PC-9 (cell line): ENCODE measurements at regions of chr22 and their contacts with region 1.

Region 1: DNA sequence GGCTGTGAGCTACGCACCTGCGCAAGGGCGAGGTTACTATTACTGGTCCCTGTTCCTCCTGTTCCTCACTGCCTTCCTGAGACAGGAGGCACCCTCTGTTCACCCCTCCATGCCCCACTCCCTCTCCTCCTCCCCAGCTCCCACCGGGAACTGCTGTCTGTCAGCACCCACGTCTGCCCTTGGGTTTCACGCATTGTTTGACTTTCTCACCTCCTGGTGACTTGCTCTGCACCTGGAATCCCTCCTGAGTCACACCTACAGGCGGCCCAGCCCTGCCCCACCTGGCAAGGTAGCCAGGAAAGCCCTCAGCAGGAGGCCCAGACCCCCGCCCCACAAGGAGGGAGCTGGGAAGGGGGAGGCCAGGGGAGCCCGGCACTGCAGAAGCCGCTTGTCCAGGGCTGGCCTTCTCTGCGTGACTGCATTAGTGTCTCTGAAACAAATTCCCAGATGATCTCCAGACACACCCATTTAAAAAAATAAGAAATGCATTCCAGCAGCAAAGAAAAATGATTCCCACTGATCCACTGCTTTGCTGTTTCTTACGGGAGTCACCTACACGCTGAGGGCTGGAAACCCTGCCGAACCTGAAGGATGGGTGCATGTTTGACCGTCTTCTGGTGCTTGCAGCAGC is 86.4 kb downstream of the CELSR1 start:
- DNase-seq: peak; percentile 92 to 95
- H3K4me3 ChIP-seq: peak overlapping the region; percentile 1; the same call in 1 of the 2 replicates
- H3K27ac ChIP-seq: peak overlapping the region; percentile 96
- H3K4me1 ChIP-seq: peaks cover 83% of the 10 kb centered on the region
- H3K27me3 ChIP-seq: no peaks in the 10 kb centered on the region
- CTCF ChIP-seq: no peak

Region 2: DNA sequence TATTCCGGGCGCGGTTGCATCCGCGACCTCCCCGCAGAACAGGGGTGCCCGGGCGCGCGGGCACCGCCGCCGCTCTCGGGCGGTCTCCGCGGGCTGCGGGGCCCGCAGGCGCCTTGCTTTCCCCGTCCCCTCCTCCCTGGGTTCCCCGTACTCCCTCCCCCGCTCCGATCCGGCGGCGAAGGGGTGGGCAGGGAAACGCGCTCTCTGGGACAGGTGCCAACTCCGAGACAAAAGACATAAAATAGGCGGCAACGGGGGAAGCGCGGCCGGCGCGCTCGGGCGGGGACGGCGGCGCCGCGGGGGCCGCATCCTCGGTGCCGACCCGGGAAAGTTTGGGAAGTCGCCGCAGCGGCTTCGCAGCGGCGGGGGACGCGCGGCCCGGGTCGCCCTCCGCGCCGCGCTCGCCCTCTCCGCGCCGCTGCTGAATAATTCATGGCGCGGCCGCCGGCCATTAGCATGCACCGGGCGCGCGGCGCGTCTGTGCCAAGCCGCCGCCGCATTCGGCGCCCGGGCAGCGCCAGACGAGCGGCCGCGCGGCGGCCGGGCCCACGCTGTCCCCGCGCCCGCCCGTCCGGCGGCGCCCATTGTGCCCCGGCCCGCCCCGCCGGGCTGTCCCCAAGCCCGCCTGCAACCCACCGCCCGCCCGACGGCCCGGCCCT is 379.5 kb before region 1 on chr22:
- CTCF ChIA-PET with region 1: no interaction called
- POLR2A ChIA-PET with region 1: no interaction called
- intact Hi-C with region 1: no loop called
- DNase-seq: peak; percentile 80 to 92
- H3K4me3 ChIP-seq: peak overlapping the region; percentile 99
- H3K27ac ChIP-seq: peak overlapping the region; percentile 68
- H3K4me1 ChIP-seq: peaks cover 44% of the 10 kb centered on the region
- H3K27me3 ChIP-seq: no peaks in the 10 kb centered on the region
- CTCF ChIP-seq: no peak

Region 3: GRCh38 chr22:46377566-46378425 is 73.2 kb before region 1 on chr22:
- CTCF ChIA-PET with region 1: no interaction called
- POLR2A ChIA-PET with region 1: no interaction called
- intact Hi-C with region 1: loop called (anchors 1 kb)
- DNase-seq: peak; percentile 94 to 96
- H3K4me3 ChIP-seq: peak overlapping the region; percentile 39; the same call in 1 of the 2 replicates
- H3K27ac ChIP-seq: peak overlapping the region; percentile 95
- H3K4me1 ChIP-seq: peaks cover 67% of the 10 kb centered on the region
- H3K27me3 ChIP-seq: no peaks in the 10 kb centered on the region
- CTCF ChIP-seq: no peak

Region 4: GRCh38 chr22:46501701-46502100 is 50.7 kb after region 1 on chr22:
- CTCF ChIA-PET with region 1: no interaction called
- POLR2A ChIA-PET with region 1: no interaction called
- intact Hi-C with region 1: loop called (anchors 2 kb)
- DNase-seq: peak; percentile 60 to 87
- H3K4me3 ChIP-seq: no peak overlapping the region
- H3K27ac ChIP-seq: peak overlapping the region; percentile 81
- H3K4me1 ChIP-seq: peaks cover 32% of the 10 kb centered on the region
- H3K27me3 ChIP-seq: no peaks in the 10 kb centered on the region
- CTCF ChIP-seq: no peak